Heart right ventricle (tissue), 16 donors: ENCODE measurements at regions of chr3 and their contacts with region 1.

Region 1: DNA sequence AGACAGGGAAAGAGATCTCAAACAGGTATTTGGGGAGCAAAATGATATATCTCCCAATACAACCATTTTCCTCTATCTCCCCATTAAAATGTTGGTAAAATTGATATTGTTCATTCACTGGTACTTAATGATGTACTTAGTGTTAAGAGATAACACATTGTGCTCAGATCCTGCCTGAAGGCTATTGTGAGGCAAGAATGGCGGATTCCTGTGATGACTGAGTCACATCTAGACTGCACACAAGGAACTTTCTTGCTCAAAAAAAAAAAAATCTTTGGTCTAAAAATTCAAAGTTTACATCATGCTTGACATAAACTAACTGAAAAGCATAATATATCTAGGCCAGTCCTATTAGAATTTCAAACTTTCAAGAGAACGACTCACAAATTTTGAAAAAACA is 171.1 kb upstream of the TTC14 start:
- DNase-seq: no peak
- ATAC-seq: no peak
- H3K4me3 ChIP-seq: no peak overlapping the region
- H3K27ac ChIP-seq: no peak overlapping the region
- H3K4me1 ChIP-seq: no peaks in the 10 kb centered on the region
- H3K27me3 ChIP-seq: no peaks in the 10 kb centered on the region
- CTCF ChIP-seq: no peak

Region 2: GRCh38 chr3:180358179-180358578 is 72.7 kb before region 1 on chr3:
- intact Hi-C with region 1: no loop called
- DNase-seq: no peak
- ATAC-seq: no peak
- H3K4me3 ChIP-seq: no peak overlapping the region
- H3K27ac ChIP-seq: no peak overlapping the region
- H3K4me1 ChIP-seq: no peaks in the 10 kb centered on the region
- H3K27me3 ChIP-seq: no peaks in the 10 kb centered on the region
- CTCF ChIP-seq: no peak

Region 3: GRCh38 chr3:180408654-180409053 is 22.2 kb before region 1 on chr3:
- intact Hi-C with region 1: loop called in 1 of 10 experiments (anchors 1 kb)
- DNase-seq: no peak
- ATAC-seq: no peak
- H3K4me3 ChIP-seq: no peak overlapping the region
- H3K27ac ChIP-seq: no peak overlapping the region
- H3K4me1 ChIP-seq: no peaks in the 10 kb centered on the region
- H3K27me3 ChIP-seq: no peaks in the 10 kb centered on the region
- CTCF ChIP-seq: no peak